Caco-2 (cell line): ENCODE measurements at regions of chr12 and their contacts with region 1.

Region 1: GRCh38 chr12:52480073-52480472 is 6.5 kb upstream of the KRT6C start:
- DNase-seq: no peak
- H3K4me3 ChIP-seq: no peak overlapping the region
- H3K4me3 Mint-ChIP-seq: no peak overlapping the region
- H3K27ac Mint-ChIP-seq: no peak overlapping the region
- H3K4me1 ChIP-seq: no peaks in the 10 kb centered on the region
- H3K4me1 Mint-ChIP-seq: no peaks in the 10 kb centered on the region
- H3K27me3 ChIP-seq: no peaks in the 10 kb centered on the region
- H3K27me3 Mint-ChIP-seq: peaks cover 11% of the 10 kb centered on the region
- CTCF ChIP-seq: no peak

Region 2: GRCh38 chr12:52069327-52070184 is 410.5 kb before region 1 on chr12 and contains the start of gene ATG101:
- CTCF ChIA-PET with region 1: no interaction called
- POLR2A ChIA-PET with region 1: no interaction called
- intact Hi-C with region 1: no loop called
- DNase-seq: peak; percentile 96
- H3K4me3 ChIP-seq: peak within 1 kb of the TSS; percentile 80
- H3K4me3 Mint-ChIP-seq: peak within 1 kb of the TSS; percentile 85
- H3K27ac Mint-ChIP-seq: peak within 1 kb of the TSS; percentile 100
- H3K4me1 ChIP-seq: peaks cover 12% of the 10 kb centered on the region
- H3K4me1 Mint-ChIP-seq: peaks cover 30% of the 10 kb centered on the region
- H3K27me3 ChIP-seq: no peaks in the 10 kb centered on the region
- H3K27me3 Mint-ChIP-seq: no peaks in the 10 kb centered on the region
- CTCF ChIP-seq: peak; percentile 47 to 97
- total RNA-seq, gene ATG101: 67.2 and 78.0 TPM in 2 replicates

Region 3: GRCh38 chr12:52713960-52714886 is 234.2 kb after region 1 on chr12:
- CTCF ChIA-PET with region 1: interaction called, 10 read pairs
- POLR2A ChIA-PET with region 1: no interaction called
- intact Hi-C with region 1: no loop called
- DNase-seq: no peak
- H3K4me3 ChIP-seq: no peak overlapping the region
- H3K4me3 Mint-ChIP-seq: no peak overlapping the region
- H3K27ac Mint-ChIP-seq: no peak overlapping the region
- H3K4me1 ChIP-seq: no peaks in the 10 kb centered on the region
- H3K4me1 Mint-ChIP-seq: no peaks in the 10 kb centered on the region
- H3K27me3 ChIP-seq: no peaks in the 10 kb centered on the region
- H3K27me3 Mint-ChIP-seq: no peaks in the 10 kb centered on the region
- CTCF ChIP-seq: no peak